ENCODE measurements at regions of chr9 and their contacts with region 1.

Region 1: GRCh38 chr9:96350866-96351265 is 32.6 kb downstream of the SLC35D2 start:
- DNase-seq: no peak
- H3K4me3 ChIP-seq: no peak overlapping the region
- H3K27ac ChIP-seq: no peak overlapping the region
- H3K4me1 ChIP-seq: no peaks in the 10 kb centered on the region
- H3K27me3 ChIP-seq: no peaks in the 10 kb centered on the region
- CTCF ChIP-seq: no peak

Region 2: DNA sequence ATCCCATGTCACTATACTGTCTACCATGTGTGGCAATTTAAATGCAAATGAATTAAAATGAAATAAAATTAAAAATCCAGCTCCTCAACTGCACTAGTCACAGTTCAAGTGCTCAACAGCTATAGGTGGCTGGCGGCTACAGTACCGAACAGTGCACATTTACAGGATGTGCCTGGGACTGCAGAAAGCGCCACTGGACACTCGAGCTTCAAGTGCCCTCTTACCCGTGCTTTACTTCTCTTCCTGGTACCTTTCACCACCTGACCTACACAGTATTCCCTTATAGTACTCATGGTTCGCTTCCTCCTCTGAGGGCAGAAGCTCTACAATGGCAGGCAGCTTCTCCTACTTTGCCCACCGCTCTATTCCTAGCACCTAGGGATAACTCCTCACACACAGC is 1200.0 kb before region 1 on chr9:
- intact Hi-C with region 1: loop called (anchors 5 kb)
- DNase-seq: no peak
- H3K4me3 ChIP-seq: no peak overlapping the region
- H3K27ac ChIP-seq: no peak overlapping the region
- H3K4me1 ChIP-seq: no peaks in the 10 kb centered on the region
- H3K27me3 ChIP-seq: no peaks in the 10 kb centered on the region
- CTCF ChIP-seq: no peak

Region 3: DNA sequence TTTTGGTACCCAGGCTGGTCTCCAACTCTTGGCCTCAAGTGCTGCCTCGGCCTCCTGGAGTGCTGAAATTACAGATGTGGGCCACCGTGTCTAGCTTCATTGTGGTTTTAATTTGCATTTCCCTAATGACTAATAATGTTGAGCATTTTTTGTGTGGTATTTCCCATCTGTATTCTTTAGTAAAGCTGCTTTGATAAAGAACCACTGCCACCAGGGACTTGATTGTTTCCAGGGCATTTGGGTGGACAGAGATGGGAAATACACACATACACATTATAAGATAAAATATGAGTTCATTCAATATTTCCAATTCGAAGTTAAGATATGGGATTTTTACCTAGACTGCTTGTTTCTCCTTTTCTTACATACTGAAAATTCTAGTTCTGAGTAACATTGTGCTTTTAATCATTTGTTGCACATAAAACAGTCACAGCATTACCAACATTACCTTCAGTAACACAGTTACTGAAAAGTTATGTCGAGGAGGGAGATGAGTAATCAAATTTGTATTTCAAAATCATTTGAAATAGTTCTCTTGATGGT is 128.0 kb after region 1 on chr9:
- intact Hi-C with region 1: no loop called
- DNase-seq: no peak
- H3K4me3 ChIP-seq: no peak overlapping the region
- H3K27ac ChIP-seq: no peak overlapping the region
- H3K4me1 ChIP-seq: peaks cover 7% of the 10 kb centered on the region
- H3K27me3 ChIP-seq: no peaks in the 10 kb centered on the region
- CTCF ChIP-seq: no peak